ENCODE measurements at regions of chr7 and their contacts with region 1.

Region 1: DNA sequence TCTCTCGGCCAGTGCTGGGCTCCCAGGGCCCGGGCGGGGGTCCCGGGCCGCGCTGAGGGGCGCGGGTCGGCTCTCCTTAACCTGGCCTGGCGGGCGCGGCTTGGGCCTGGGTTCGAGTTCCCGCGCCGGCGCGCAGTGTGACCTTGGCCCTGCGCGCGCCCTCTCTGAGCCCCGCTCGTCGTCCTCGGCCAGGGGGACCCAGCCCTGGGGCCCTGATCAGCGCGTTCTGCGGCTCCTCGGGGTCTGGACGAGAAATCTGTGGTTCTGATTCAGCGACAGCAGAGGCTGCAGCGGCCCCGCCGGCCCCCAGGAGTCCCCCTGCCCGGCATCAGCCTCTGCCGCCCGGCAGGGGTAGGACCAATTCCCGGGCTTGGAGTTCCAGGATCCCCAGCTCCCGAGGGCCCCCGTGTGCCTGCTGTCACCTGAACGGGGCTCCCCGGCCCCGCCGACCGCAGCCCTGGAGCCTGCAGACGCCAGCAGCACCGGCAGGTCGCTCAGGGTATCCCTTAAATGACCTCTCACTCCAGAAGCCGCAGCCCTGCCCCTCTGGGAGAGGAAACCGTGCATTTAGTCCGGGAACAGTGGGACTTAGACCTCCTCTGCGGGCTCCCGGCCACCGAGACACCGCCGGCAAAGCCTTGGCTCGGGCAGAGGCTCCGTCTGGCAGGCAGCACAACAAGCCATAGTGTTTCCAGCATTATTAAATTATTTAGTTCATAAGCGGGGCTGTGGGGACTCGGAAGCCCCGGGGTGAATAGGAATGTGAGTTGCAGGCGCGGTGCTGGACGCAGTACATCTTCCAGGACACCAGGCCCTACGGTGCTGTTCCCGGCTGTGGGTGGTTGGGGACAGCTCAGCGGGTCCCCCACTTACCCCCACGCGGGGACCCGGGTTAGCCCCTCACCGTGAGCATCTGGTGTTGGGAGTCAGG is 572 bp downstream of the CHST12 start:
- DNase-seq: peak; percentile 40
- ATAC-seq: peak; percentile 24
- H3K4me3 Mint-ChIP-seq: peak overlapping the region; percentile 78
- H3K27ac Mint-ChIP-seq: peak overlapping the region; percentile 93
- H3K4me1 Mint-ChIP-seq: peaks cover 66% of the 10 kb centered on the region
- H3K27me3 Mint-ChIP-seq: no peaks in the 10 kb centered on the region

Region 2: DNA sequence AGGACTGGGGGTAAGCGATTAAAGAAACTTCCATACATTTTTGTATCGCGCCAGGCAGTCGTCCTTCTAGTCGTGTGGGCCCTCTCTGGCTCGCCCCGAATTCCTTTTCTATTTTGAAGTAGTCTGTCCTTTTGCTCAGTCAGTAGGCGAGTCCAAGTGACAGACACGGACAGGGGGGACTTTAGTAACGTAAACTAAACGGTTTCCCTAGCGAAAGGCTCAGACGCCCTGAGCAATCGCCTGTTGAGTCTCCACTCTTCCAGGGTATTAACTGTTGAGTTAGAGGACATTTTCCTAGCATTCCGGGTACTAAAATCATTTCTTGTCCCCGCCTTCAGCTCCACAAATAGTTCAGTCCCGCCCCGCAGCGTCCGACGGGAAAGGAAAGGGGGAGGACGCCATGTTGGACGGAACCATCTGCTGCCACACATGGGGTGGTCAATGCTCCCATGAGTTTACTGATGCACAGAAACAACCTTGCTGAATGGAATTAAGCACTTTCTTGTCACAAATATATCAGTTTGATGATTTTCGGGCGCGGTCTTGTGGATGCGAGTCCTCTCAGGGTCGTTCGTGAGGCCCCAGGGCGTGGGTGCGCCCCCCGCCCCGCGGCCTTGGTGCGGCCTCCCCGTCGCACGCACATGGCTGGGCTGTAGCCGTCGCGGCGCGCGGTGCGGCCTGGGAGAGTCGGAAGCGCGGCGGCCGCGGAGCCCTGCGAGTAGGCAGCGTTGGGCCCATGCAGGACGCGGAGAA is 49.6 kb before region 1 on chr7 and contains the start of gene EIF3B:
- CTCF ChIA-PET with region 1: no interaction called
- POLR2A ChIA-PET with region 1: interaction called, 19 read pairs
- DNase-seq: peak; percentile 93
- ATAC-seq: peak; percentile 90
- H3K4me3 Mint-ChIP-seq: peak within 1 kb of the TSS; percentile 90
- H3K27ac Mint-ChIP-seq: peak within 1 kb of the TSS; percentile 100
- H3K4me1 Mint-ChIP-seq: peaks cover 32% of the 10 kb centered on the region
- H3K27me3 Mint-ChIP-seq: no peaks in the 10 kb centered on the region
- total RNA-seq, gene EIF3B: 174 to 184 TPM

Region 3: DNA sequence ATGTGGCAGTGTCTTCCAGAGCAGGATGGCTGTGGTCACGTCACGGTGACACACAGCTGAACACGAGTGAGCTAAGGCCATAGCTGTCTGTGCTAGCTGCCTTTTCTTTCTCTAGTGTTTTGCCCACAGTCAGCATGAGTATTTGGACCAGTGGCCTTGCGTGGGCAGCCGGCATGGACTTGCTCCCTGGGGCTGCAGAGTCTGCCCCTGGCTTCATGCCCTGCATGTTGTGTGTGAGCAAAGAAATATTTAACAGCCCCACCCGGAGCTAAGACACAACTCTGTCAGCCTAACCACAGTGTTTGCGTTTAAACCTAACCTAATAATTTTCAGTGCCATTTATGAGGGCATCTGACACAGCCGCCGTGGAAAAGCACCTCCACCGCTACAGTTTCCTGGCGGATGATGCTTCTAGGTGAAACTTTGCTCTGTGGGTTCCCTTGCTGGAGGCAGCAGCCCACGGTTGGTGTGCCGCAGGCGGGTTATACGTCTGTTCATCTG is 14.0 kb after region 1 on chr7:
- CTCF ChIA-PET with region 1: interaction called, 9 read pairs
- POLR2A ChIA-PET with region 1: interaction called, 23 read pairs
- DNase-seq: peak; percentile 77
- ATAC-seq: peak; percentile 86
- H3K4me3 Mint-ChIP-seq: peak overlapping the region; percentile 46
- H3K27ac Mint-ChIP-seq: peak overlapping the region; percentile 81
- H3K4me1 Mint-ChIP-seq: peaks cover 55% of the 10 kb centered on the region
- H3K27me3 Mint-ChIP-seq: no peaks in the 10 kb centered on the region

Measured in activated CD8-positive, alpha-beta T cell treated with anti-CD3 and anti-CD28 coated beads, Interleukin-2, amount 10 ng/mL, durations not matched to agents 7 days and 5 days (primary cell).